ENCODE measurements at regions of chr13 and their contacts with region 1.

Region 1: DNA sequence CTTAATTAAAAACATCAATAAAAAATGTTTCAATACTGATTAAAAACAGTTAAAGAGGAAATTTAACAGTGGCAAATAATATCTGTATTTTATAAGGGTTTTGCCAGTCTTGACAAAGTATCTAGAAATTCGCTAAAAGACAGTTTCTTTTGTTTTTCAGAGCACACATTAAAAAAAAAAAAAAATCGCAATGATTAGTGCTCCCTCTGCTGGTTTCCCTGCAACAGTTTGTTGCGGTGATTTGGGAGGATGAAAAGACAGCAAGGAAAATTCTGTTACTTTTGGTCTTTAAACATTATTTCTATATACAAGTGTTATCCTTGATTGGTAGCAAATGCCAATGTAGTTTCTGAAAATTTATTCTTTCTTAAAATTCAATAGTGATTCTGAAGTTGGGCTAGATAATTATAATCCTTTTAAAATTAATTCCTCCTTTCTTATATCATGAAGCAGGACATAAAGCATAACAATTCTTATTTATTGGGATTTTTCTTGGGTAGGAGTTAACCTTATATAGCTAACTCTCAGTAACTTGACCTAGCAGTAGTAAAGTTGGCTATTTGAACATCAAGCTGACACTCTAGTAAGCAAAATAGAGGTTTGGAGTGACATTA is 23.1 kb upstream of the SPRY2 start:
- DNase-seq: no peak
- ATAC-seq: no peak
- H3K4me3 Mint-ChIP-seq: no peak overlapping the region
- H3K27ac Mint-ChIP-seq: no peak overlapping the region
- H3K4me1 Mint-ChIP-seq: no peaks in the 10 kb centered on the region
- H3K27me3 Mint-ChIP-seq: peaks cover 2% of the 10 kb centered on the region

Region 2: GRCh38 chr13:79775830-79776229 is 588.2 kb before region 1 on chr13:
- CTCF ChIA-PET with region 1: no interaction called
- POLR2A ChIA-PET with region 1: no interaction called
- intact Hi-C with region 1: loop called (anchors 5 to 10 kb)
- DNase-seq: peak; percentile 7
- ATAC-seq: no peak
- H3K4me3 Mint-ChIP-seq: no peak overlapping the region
- H3K27ac Mint-ChIP-seq: no peak overlapping the region
- H3K4me1 Mint-ChIP-seq: peaks cover 5% of the 10 kb centered on the region
- H3K27me3 Mint-ChIP-seq: no peaks in the 10 kb centered on the region

Region 3: GRCh38 chr13:79973533-79973963 is 390.4 kb before region 1 on chr13:
- CTCF ChIA-PET with region 1: no interaction called
- POLR2A ChIA-PET with region 1: no interaction called
- intact Hi-C with region 1: loop called in 1 of 2 experiments (anchors 10 kb)
- DNase-seq: peak; percentile 7
- ATAC-seq: no peak
- H3K4me3 Mint-ChIP-seq: no peak overlapping the region
- H3K27ac Mint-ChIP-seq: no peak overlapping the region
- H3K4me1 Mint-ChIP-seq: no peaks in the 10 kb centered on the region
- H3K27me3 Mint-ChIP-seq: no peaks in the 10 kb centered on the region

Region 4: DNA sequence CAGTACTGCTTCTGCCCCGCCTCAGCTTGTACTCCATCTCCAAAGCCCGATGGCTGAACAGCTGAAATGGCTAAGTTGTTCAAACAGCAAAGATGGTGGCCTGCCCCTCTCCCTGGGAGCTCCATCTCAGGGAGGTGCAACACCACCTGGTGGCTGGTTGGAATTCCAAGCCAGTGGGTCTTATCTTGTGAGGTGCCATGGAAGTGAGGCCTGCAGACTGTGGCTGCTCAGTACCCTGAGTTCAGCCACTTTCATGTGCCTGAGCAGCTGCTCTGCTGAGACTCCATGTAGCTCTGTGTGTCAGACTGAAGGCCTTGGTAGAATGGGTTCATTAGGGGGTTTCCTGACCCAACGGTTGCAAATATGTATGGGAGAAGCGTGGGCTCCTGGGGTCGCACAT is 44.3 kb after region 1 on chr13:
- CTCF ChIA-PET with region 1: no interaction called
- POLR2A ChIA-PET with region 1: no interaction called
- intact Hi-C with region 1: no loop called
- DNase-seq: peak; percentile 12
- ATAC-seq: no peak
- H3K4me3 Mint-ChIP-seq: no peak overlapping the region
- H3K27ac Mint-ChIP-seq: no peak overlapping the region
- H3K4me1 Mint-ChIP-seq: no peaks in the 10 kb centered on the region
- H3K27me3 Mint-ChIP-seq: no peaks in the 10 kb centered on the region

Measured in activated CD4-positive, alpha-beta T cell treated with anti-CD3 and anti-CD28 coated beads for 36 hours (primary cell).